Ovary (tissue), 10 donors: ENCODE measurements at regions of chr7 and their contacts with region 1.

Region 1: GRCh38 chr7:119132436-119132835 is 907.9 kb downstream of the ANKRD7 start:
- DNase-seq: no peak
- H3K4me3 ChIP-seq: no peak overlapping the region
- H3K27ac ChIP-seq: no peak overlapping the region
- H3K4me1 ChIP-seq: no peaks in the 10 kb centered on the region
- H3K27me3 ChIP-seq: no peaks in the 10 kb centered on the region
- CTCF ChIP-seq: no peak
- EP300 ChIP-seq: no peak
- POLR2A ChIP-seq: no peak

Region 2: GRCh38 chr7:119232091-119232490 is 99.7 kb after region 1 on chr7:
- intact Hi-C with region 1: loop called in 1 of 4 experiments (anchors 5 kb)
- DNase-seq: no peak
- H3K4me3 ChIP-seq: no peak overlapping the region
- H3K27ac ChIP-seq: no peak overlapping the region
- H3K4me1 ChIP-seq: no peaks in the 10 kb centered on the region
- H3K27me3 ChIP-seq: no peaks in the 10 kb centered on the region
- CTCF ChIP-seq: no peak
- EP300 ChIP-seq: no peak
- POLR2A ChIP-seq: no peak